ENCODE measurements at regions of chr1 and their contacts with region 1.

Region 1: GRCh38 chr1:167763525-167764220 is 41.9 kb downstream of the MPZL1 start:
- DNase-seq: no peak
- ATAC-seq: no peak
- H3K4me3 ChIP-seq: no peak overlapping the region
- H3K27ac ChIP-seq: no peak overlapping the region
- H3K4me1 ChIP-seq: peaks cover 11 to 54% of the 10 kb centered on the region in 2 experiments
- H3K27me3 ChIP-seq: no peaks in the 10 kb centered on the region
- CTCF ChIP-seq: no peak
- EP300 ChIP-seq: no peak
- POLR2A ChIP-seq: no peak
- RAD21 ChIP-seq: no peak

Region 2: GRCh38 chr1:167297222-167298214 is 466.2 kb before region 1 on chr1:
- CTCF ChIA-PET with region 1: no interaction called
- POLR2A ChIA-PET with region 1: no interaction called
- in situ Hi-C with region 1: no loop called
- intact Hi-C with region 1: no loop called
- DNase-seq: no peak
- ATAC-seq: peak; percentile 73
- H3K4me3 ChIP-seq: no peak overlapping the region
- H3K27ac ChIP-seq: no peak overlapping the region
- H3K4me1 ChIP-seq: 0 out of 5 replicates have a peak, but pooled peaks cover 0 to 6% of the 10 kb centered on the region in 2 experiments
- H3K27me3 ChIP-seq: no peaks in the 10 kb centered on the region
- CTCF ChIP-seq: no peak
- EP300 ChIP-seq: no peak
- POLR2A ChIP-seq: no peak
- RAD21 ChIP-seq: no peak

Region 3: DNA sequence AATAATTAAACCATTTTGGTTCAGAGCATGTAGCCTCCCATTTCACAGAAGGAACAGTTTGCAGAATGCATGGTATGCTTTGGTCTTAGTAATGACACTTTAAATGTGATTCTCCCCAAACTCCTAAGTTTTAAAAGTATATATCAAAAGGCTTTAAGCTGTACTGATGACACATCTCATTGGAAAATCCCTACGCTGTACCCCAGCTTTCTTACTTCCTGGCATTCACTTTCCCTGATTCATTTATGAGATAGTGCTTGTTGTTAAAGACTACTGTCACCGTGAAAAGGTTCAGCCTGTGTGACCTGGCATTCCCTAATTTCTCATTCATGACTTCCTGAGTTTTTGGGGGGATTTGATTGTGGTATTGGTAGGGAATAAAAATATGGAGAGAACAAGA is 11.5 kb after region 1 on chr1:
- CTCF ChIA-PET with region 1: no interaction called
- POLR2A ChIA-PET with region 1: interaction called, 14 read pairs
- in situ Hi-C with region 1: no loop called
- intact Hi-C with region 1: no loop called
- DNase-seq: no peak
- ATAC-seq: no peak
- H3K4me3 ChIP-seq: no peak overlapping the region
- H3K27ac ChIP-seq: no peak overlapping the region
- H3K4me1 ChIP-seq: peaks cover 1 to 5% of the 10 kb centered on the region in 2 experiments; a peak in 3 of 5 replicates
- H3K27me3 ChIP-seq: no peaks in the 10 kb centered on the region
- CTCF ChIP-seq: no peak
- EP300 ChIP-seq: no peak
- POLR2A ChIP-seq: no peak
- RAD21 ChIP-seq: no peak

Measured in K562 (cell line).